HepG2 (cell line): ENCODE measurements at regions of chr3 and their contacts with region 1.

Region 1: GRCh38 chr3:196942226-196942914 is at the start of gene NCBP2:
- DNase-seq: peak; percentile 95
- ATAC-seq: peak; percentile 91
- H3K4me3 ChIP-seq: peak within 1 kb of the TSS; percentile 74 to 99 (median 97)
- H3K27ac ChIP-seq: peak within 1 kb of the TSS; percentile 95
- H3K4me1 ChIP-seq: peaks cover 73% of the 10 kb centered on the region
- H3K27me3 ChIP-seq: peaks cover 0 to 3% of the 10 kb centered on the region in 2 experiments; a peak in 2 of 5 replicates
- CTCF ChIP-seq: peak; percentile 98
- EP300 ChIP-seq: no peak
- POLR2A ChIP-seq: peak in 1 of 2 experiments; percentile 84; a peak in 2 of 4 replicates
- RAD21 ChIP-seq: peak; percentile 75
- total RNA-seq, gene NCBP2: 58.7 and 69.2 TPM in 2 replicates

Region 2: DNA sequence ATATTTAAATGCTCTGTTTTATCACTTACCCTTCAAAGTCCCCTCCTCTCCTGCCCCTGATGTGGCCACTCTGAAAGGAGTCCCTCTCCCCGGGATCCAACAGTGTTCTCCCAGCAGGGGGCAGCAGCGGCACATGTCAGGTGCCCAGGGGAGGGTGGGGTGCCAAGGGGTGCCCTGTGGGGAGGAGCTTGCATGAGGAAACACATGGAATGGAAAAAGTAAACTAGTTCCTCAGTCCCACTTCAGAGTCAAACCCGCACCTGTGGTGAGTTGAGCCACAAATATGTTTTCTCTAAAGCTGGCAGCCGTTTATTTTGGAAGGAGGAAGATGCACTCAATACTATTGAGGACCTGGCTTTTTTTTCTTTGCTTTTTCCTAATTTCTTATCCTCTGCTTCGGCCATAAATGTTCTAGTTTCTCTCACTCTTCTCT is 333.0 kb before region 1 on chr3:
- CTCF ChIA-PET with region 1: no interaction called
- POLR2A ChIA-PET with region 1: no interaction called
- in situ Hi-C with region 1: no loop called
- intact Hi-C with region 1: loop called (anchors 1 kb)
- DNase-seq: peak; percentile 64
- ATAC-seq: peak; percentile 99
- H3K4me3 ChIP-seq: no peak overlapping the region
- H3K27ac ChIP-seq: no peak overlapping the region
- H3K4me1 ChIP-seq: peaks cover 11% of the 10 kb centered on the region
- H3K27me3 ChIP-seq: peaks cover 0 to 24% of the 10 kb centered on the region in 2 experiments; a peak in 3 of 5 replicates
- CTCF ChIP-seq: peak; percentile 94
- EP300 ChIP-seq: no peak
- POLR2A ChIP-seq: no peak
- RAD21 ChIP-seq: peak; percentile 87

Region 3: DNA sequence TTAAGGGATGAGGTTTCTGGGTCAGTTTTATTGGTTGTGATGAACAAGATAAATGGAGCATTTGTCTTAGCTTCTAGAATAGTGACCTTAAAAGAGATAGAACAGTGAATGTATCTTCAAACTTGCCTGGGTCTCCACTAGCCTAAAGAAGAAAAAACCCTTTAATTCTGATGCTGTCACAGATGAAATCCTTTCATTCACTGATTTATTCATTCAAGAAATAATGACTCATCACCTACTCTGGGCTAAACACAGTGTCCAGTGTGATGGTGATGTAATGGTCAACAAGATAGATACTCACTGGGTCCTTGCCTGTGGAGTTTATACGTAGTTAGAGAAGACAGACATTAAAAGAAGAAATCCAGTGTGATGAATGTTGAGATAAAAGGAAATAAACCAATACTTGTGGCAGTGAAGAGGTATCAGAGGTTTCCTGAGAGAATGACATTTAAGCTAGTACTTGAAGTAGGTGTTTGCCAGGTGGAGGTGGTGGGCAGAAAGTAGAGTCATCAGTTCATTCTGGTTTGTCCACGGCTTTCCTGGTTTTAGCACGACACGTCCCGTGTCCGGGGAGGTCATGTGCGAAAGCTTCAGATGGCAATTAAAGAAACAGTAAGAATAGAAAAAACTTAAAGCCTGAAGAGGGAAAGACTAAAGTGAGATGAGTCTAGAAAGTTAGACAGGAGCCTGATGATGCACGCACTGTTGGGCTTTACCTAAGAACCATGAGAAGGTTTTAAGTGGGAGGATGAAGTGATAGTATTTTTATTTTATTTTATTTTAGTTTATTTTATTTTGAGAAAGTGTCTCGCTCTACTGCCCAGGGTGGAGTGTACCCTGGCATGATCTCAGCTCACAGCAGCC is 184.3 kb before region 1 on chr3:
- CTCF ChIA-PET with region 1: no interaction called
- POLR2A ChIA-PET with region 1: no interaction called
- in situ Hi-C with region 1: no loop called
- intact Hi-C with region 1: no loop called
- DNase-seq: no peak
- ATAC-seq: no peak
- H3K4me3 ChIP-seq: no peak overlapping the region
- H3K27ac ChIP-seq: no peak overlapping the region
- H3K4me1 ChIP-seq: peaks cover 51% of the 10 kb centered on the region
- H3K27me3 ChIP-seq: no peaks in the 10 kb centered on the region
- CTCF ChIP-seq: no peak
- EP300 ChIP-seq: no peak
- POLR2A ChIP-seq: no peak
- RAD21 ChIP-seq: no peak

Region 4: DNA sequence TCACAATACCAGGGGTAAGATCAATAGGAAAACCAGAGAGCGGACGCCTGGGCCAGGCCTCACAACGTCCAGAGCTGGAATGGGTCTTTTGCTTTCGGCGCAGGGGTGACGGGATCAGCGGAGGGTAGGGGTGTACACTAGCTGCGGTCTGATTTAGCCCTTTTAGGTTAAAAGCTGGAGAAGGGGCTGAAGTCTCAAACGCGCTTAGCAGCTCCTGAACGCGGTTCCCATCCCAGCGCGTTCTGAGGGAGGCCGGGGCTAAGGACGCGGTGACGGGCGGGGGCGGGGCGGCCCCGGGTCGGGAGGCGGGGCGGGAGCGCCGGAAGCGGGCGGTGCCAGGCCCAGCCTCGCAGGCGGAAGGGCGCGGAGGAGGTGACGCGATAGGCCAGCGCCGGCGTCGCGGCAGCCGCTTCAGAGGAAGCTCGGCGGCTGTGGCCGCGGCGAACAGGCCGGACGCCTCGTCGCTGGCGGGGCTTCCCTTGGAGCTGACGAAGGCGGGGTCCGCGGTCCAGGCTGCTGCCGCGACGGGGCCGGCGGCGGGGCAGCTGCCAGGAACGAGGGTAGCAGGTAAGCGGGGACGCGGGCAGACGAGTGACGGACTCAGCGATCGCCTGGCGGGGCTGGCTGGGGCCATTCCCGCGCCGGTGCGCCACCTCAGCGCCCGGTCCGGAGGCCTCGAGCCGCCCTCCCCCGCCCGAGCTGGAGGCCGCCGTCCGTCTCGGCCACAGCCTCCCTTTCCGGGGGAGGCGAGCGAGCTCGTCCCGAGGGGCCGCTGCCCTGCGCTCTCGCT is 74.7 kb before region 1 on chr3 and contains the start of gene SENP5:
- CTCF ChIA-PET with region 1: no interaction called
- POLR2A ChIA-PET with region 1: interaction called, 33 read pairs
- in situ Hi-C with region 1: no loop called
- intact Hi-C with region 1: no loop called
- DNase-seq: peak; percentile 75
- ATAC-seq: peak; percentile 93
- H3K4me3 ChIP-seq: peak within 1 kb of the TSS; percentile 66 to 97 (median 96)
- H3K27ac ChIP-seq: peak within 1 kb of the TSS; percentile 89
- H3K4me1 ChIP-seq: peaks cover 29% of the 10 kb centered on the region
- H3K27me3 ChIP-seq: no peaks in the 10 kb centered on the region
- CTCF ChIP-seq: no peak; the same call in 1 of the 2 replicates
- EP300 ChIP-seq: peak in 1 of 2 experiments; percentile 30; a peak in 1 of 4 replicates
- POLR2A ChIP-seq: peak; percentile 94
- RAD21 ChIP-seq: peak; percentile 57; the same call in 1 of the 2 replicates
- total RNA-seq, gene SENP5: 30.9 and 45.2 TPM in 2 replicates

Region 5: GRCh38 chr3:197002701-197003454 is 60.5 kb after region 1 on chr3:
- CTCF ChIA-PET with region 1: no interaction called
- POLR2A ChIA-PET with region 1: no interaction called
- in situ Hi-C with region 1: no loop called
- intact Hi-C with region 1: no loop called
- DNase-seq: peak; percentile 30
- ATAC-seq: peak; percentile 52
- H3K4me3 ChIP-seq: peak overlapping the region in 1 of 3 experiments; percentile 52; a peak in 3 of 6 replicates
- H3K27ac ChIP-seq: no peak overlapping the region
- H3K4me1 ChIP-seq: peaks cover 33% of the 10 kb centered on the region
- H3K27me3 ChIP-seq: no peaks in the 10 kb centered on the region
- CTCF ChIP-seq: peak; percentile 60
- EP300 ChIP-seq: no peak
- POLR2A ChIP-seq: no peak
- RAD21 ChIP-seq: peak; percentile 68